G401 (cell line): ENCODE measurements at regions of chr1 and their contacts with region 1.

Region 1: DNA sequence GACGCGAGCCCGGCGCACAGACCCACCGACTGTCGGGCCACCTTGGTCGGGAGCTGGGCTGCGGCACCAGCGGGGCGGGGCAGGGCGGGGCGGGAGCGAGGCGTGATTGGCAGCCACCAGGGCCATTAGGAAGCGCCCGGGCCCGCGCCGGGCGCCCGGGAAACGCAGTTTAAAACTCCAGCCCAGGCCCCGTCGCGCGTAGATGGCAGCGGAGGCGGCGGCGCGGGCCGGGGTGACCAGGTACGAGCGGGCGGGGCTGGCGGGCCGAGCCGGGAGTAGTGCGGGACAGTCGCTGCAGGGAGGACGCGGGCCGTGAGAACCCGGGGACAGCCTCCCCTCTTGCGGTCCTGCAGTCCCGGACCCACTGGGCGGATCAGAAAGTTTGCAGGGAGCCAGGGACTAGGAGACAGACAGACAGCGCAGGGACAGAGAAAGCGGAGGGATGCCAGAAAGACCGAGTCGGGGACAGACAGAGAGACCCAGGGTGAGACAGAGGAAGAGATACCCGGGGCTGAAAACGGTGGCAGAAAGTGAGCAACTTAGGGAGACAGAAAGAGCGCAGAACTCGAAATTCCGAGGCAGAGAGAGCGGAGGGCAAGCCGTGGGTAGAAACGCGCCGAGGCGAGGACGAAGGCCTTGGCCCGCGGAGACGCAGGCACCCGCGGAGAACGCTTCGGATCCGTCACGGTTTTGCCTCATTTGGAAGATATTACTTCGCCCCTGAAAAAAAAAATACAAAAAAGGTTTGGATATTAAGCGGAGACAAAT is at the start of gene DMBX1:
- DNase-seq: no peak
- total RNA-seq, gene DMBX1: 0.20 and 1.0 TPM in 2 replicates

Region 2: DNA sequence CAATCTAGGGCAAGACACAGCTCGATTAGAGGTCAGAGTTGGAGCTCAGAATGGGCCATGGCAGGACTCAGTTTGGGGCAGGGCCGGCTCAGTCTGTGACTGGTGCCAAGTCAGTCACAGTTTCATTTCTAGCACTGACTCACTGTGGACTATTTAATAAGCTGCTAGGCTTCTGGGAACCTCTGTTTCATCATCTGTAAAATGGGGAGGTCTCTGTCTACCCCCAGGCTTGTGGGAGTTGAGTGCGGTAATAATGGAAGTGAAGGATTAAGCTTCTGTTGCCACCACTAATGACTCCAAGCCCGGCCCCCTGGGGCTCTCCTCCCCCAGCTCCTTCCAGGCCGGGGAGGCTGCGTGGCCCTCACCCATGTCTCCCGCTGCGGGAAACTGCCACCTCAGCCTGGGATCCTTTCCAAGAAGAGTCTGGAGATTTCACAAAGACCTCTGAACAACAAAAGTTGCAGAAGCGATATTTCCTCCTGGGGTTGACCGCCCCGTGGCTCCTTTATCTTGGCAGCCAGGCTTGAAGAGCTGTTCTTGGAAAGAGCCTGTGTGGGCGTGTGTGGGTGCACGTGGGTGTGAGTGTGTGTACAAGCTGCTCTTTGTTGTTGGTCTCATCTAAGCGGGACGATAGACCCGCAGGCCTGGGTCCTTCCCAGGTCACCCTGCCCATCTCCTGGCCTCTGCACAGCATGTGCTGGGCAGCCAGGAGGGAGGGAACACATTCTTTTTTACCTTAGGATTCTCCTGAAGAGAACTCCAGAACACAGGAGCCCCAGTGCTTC is 32.6 kb after region 1 on chr1:
- in situ Hi-C with region 1: loop called (anchors 5 kb)
- DNase-seq: no peak